GM10248 (cell line): ENCODE measurements at regions of chr1 and their contacts with region 1.

Region 1: DNA sequence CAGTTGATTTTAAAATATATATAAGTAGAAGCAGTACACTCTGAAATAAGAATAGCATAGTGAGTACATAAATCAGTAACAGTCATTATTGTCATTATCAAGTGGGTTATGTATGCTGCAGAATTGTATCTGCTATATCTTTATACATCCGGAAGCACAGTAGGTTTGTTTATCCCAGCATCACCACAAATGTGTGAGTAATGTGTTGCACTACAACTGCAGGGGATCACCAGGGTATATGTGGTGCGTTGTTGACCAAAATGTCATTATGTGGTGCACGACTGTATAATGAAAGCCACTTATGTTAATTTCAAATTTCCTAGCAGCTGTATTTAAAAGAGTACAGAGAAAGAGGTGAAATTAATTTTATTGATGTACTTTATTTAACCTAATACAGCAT is 87.7 kb upstream of the GADD45A start:
- DNase-seq: no peak
- CTCF ChIP-seq: no peak

Region 2: DNA sequence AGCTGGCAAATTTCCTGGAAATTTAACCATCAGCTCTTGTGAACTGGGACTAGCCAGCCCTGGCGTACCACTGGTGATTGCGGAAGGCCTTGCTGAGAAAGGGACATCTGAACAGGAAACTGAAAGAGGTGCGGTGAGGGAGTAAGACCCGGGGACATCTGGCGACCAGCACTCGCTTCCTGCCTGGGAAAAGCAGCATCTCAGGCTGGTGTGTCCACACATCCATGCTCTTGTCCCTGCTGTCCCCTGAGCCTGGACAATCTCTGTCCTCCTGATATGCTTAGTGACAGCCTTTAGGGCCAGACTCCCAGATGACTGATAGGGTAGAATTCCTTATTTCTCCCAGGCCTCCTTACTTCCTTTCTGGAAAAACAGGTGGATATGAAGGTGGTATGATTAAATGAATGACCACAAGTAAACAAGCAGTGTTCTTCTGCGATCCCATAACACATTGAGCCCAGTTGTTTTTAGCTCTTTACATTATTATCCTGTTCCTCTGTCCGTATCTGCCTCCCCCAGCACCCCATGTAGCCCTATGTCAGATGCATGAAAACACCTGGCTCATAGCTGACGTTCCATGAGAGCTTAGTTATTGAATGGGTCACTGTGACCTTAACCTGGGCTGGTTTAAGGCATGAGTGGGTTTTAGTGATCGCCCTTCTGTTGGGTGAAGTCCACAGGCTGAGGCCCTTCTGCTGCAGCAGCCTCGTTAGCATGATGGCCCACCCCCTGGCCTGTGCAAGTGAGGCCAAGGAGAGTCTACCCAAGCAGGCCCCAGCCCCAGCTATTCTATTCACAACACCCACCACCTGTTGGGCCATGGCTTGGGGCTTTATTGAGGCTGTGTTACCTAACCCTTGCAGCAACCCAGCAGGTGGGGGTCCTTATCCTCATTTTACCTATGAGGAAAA is 11.6 kb after region 1 on chr1:
- CTCF ChIA-PET with region 1: interaction called, 11 read pairs
- POLR2A ChIA-PET with region 1: no interaction called
- DNase-seq: no peak
- CTCF ChIP-seq: no peak